Adrenal gland (tissue), 19 donors: ENCODE measurements at regions of chr4 and their contacts with region 1.

Region 1: DNA sequence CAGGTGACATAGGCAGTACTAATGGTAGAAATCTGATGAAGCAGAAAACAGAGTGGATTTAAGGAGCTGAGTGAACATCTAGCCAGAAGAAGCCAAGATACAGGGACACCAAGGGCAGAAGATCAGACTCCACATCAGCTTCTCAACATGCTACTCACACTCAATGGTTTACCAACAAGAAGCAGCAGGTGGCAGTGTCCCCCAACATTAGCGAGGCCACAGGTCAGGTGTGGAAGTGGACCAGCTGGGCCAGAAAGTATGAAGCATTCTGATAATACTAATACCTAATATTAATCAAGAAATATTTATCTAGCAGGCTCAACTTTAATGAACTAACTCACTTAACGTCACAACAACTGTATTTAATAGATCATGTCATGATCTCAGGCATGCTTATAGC is 73.4 kb upstream of the TTC29 start:
- DNase-seq: peak; percentile 29 to 76 (median 59)
- H3K4me3 ChIP-seq: no peak overlapping the region
- H3K27ac ChIP-seq: no peak overlapping the region
- H3K4me1 ChIP-seq: no peaks in the 10 kb centered on the region
- H3K27me3 ChIP-seq: no peaks in the 10 kb centered on the region
- CTCF ChIP-seq: peak; percentile 27 to 64 (median 53)
- POLR2A ChIP-seq: no peak

Region 2: GRCh38 chr4:146638801-146639605 is 380.1 kb before region 1 on chr4 and contains the start of gene POU4F2:
- intact Hi-C with region 1: no loop called
- DNase-seq: no peak
- H3K4me3 ChIP-seq: peak within 1 kb of the TSS in 1 of 4 donors; percentile 13
- H3K27ac ChIP-seq: no peak within 1 kb of the TSS
- H3K4me1 ChIP-seq: peaks cover 0 to 9% of the 10 kb centered on the region in 2 donors
- H3K27me3 ChIP-seq: peaks cover 79% of the 10 kb centered on the region
- CTCF ChIP-seq: no peak
- POLR2A ChIP-seq: no peak
- total RNA-seq, gene POU4F2: not detected

Region 3: GRCh38 chr4:147078875-147079658 is 60.0 kb after region 1 on chr4:
- intact Hi-C with region 1: no loop called
- DNase-seq: peak in 6 of 7 donors; percentile 18 to 58 (median 38)
- H3K4me3 ChIP-seq: no peak overlapping the region
- H3K27ac ChIP-seq: no peak overlapping the region
- H3K4me1 ChIP-seq: no peaks in the 10 kb centered on the region
- H3K27me3 ChIP-seq: no peaks in the 10 kb centered on the region
- CTCF ChIP-seq: no peak
- POLR2A ChIP-seq: no peak

Region 4: GRCh38 chr4:147096667-147097604 is 77.9 kb after region 1 on chr4:
- intact Hi-C with region 1: loop called in 1 of 2 experiments (anchors 10 kb)
- DNase-seq: no peak
- H3K4me3 ChIP-seq: no peak overlapping the region
- H3K27ac ChIP-seq: no peak overlapping the region
- H3K4me1 ChIP-seq: no peaks in the 10 kb centered on the region
- H3K27me3 ChIP-seq: no peaks in the 10 kb centered on the region
- CTCF ChIP-seq: peak; percentile 49 to 79 (median 70)
- POLR2A ChIP-seq: no peak

Region 5: GRCh38 chr4:147111033-147111367 is 91.9 kb after region 1 on chr4:
- intact Hi-C with region 1: no loop called
- DNase-seq: no peak
- H3K4me3 ChIP-seq: no peak overlapping the region
- H3K27ac ChIP-seq: no peak overlapping the region
- H3K4me1 ChIP-seq: no peaks in the 10 kb centered on the region
- H3K27me3 ChIP-seq: no peaks in the 10 kb centered on the region
- CTCF ChIP-seq: peak in 1 of 6 experiments; percentile 24
- POLR2A ChIP-seq: no peak